ENCODE measurements at regions of chr1 and their contacts with region 1.

Region 1: DNA sequence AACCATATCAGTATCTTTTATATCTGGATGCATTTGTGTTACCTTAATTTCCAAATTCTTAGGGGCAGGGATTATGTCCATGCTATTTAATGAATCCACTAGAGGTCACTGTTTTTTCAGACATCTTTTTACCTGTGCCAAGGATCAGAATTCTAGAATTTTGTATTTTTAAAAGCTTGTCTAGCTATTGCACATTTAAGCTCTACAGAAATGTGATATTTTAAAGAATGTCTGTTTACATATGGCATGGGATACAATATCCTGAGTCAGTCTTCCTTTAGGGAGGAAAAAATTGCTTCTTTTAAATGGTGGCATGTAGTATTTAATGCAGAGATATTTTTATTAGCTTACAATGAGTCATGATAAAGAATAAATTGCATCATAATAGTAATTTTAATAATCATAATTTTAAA is 11.3 kb downstream of the RPAP2 start:
- DNase-seq: no peak
- H3K4me3 ChIP-seq: no peak overlapping the region
- H3K27ac ChIP-seq: no peak overlapping the region
- H3K4me1 ChIP-seq: no peaks in the 10 kb centered on the region
- H3K27me3 ChIP-seq: no peaks in the 10 kb centered on the region
- CTCF ChIP-seq: peak; percentile 29 to 57 (median 51)
- EP300 ChIP-seq: no peak
- POLR2A ChIP-seq: no peak

Region 2: GRCh38 chr1:91836331-91837040 is 473.7 kb before region 1 on chr1:
- in situ Hi-C with region 1: no loop called
- intact Hi-C with region 1: no loop called
- DNase-seq: no peak
- H3K4me3 ChIP-seq: no peak overlapping the region
- H3K27ac ChIP-seq: peak overlapping the region; percentile 3 to 69 (median 36)
- H3K4me1 ChIP-seq: peaks cover 0 to 19% (median 8%) of the 10 kb centered on the region in 4 donors
- H3K27me3 ChIP-seq: no peaks in the 10 kb centered on the region
- CTCF ChIP-seq: peak in 2 of 5 experiments; percentile 14 to 43
- EP300 ChIP-seq: no peak
- POLR2A ChIP-seq: no peak

Region 3: GRCh38 chr1:91981996-91982609 is 328.1 kb before region 1 on chr1:
- in situ Hi-C with region 1: no loop called
- intact Hi-C with region 1: no loop called
- DNase-seq: no peak
- H3K4me3 ChIP-seq: no peak overlapping the region
- H3K27ac ChIP-seq: no peak overlapping the region
- H3K4me1 ChIP-seq: no peaks in the 10 kb centered on the region
- H3K27me3 ChIP-seq: no peaks in the 10 kb centered on the region
- CTCF ChIP-seq: no peak
- EP300 ChIP-seq: no peak
- POLR2A ChIP-seq: no peak

Region 4: DNA sequence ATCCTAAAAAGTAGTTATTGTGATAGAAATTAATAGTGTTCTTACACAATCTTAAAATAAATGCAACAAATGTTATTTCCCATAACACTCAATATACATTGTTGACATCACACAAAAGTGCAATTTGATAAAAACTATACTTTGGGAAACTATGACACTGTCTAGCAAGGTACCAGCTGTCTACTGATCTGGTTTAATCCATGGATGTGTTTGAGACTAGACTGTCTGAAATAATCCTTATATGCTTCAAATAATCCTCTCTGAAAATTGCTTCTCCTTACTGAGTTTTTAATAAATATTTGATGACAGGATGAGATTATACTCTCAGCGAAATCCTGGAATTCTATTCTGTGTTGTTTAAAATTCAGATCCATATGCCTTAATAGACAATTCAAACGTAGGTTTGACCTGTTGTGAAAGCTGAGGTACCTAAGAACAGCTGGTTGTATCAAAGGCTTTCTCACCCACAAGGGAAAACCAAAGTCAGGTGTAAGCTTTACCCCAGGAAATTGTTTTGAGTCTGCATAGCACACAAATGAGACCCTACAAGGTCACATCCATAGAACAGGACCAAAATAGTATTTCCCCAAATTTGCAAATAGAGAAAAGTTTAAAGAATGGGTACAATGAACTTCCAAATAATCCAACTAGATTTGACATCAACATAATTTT is 185.3 kb after region 1 on chr1:
- in situ Hi-C with region 1: loop called in 1 of 4 experiments (anchors 10 kb)
- intact Hi-C with region 1: no loop called
- DNase-seq: no peak
- H3K4me3 ChIP-seq: no peak overlapping the region
- H3K27ac ChIP-seq: no peak overlapping the region
- H3K4me1 ChIP-seq: no peaks in the 10 kb centered on the region
- H3K27me3 ChIP-seq: no peaks in the 10 kb centered on the region
- CTCF ChIP-seq: no peak
- EP300 ChIP-seq: no peak
- POLR2A ChIP-seq: no peak

Region 5: GRCh38 chr1:92623187-92623778 is 313.1 kb after region 1 on chr1:
- in situ Hi-C with region 1: loop called (anchors 10 to 25 kb)
- intact Hi-C with region 1: no loop called
- DNase-seq: no peak
- H3K4me3 ChIP-seq: no peak overlapping the region
- H3K27ac ChIP-seq: no peak overlapping the region
- H3K4me1 ChIP-seq: no peaks in the 10 kb centered on the region
- H3K27me3 ChIP-seq: no peaks in the 10 kb centered on the region
- CTCF ChIP-seq: peak in 4 of 5 experiments; percentile 22 to 27 (median 25)
- EP300 ChIP-seq: no peak
- POLR2A ChIP-seq: no peak

Region 6: DNA sequence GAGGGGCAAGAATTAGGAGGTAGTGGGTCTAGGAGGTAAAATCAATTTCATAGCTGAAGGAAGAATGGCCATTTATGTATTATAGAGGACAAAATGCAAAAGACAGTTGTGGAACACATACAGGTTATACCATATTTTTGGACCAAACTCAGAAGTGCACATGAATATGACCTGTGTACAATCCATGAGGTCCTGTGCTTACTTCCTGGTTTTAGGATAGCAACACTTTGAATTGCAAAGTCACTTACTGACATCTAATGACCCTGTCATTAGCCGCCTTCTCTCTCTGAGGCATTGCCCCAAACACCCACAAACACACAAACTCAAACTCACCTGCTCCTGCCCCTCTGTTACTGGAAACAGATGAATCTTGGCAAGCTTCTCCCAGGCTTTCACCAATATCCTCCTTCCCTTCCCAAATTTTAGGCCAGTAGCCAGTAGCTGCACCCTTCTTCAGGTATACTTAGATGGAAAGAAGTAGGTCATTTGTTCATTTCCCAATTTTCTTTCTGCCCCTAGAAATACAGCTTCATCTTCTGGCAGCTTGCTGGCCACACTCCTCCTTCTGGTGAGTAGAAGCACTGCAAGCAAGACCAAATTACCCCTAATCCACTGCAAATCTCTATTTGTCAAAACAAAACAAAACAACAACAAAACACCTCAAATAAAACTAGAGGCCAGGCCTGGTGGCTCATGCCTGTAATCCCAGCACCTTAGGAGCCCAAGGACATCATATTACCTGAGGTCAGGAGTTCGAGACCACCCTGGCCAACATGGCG is 508.0 kb after region 1 on chr1:
- in situ Hi-C with region 1: loop called in 1 of 4 experiments (anchors 25 kb)
- intact Hi-C with region 1: no loop called
- DNase-seq: no peak
- H3K4me3 ChIP-seq: no peak overlapping the region
- H3K27ac ChIP-seq: peak overlapping the region; percentile 57 to 77 (median 65)
- H3K4me1 ChIP-seq: peaks cover 0 to 20% (median 12%) of the 10 kb centered on the region in 4 donors
- H3K27me3 ChIP-seq: no peaks in the 10 kb centered on the region
- CTCF ChIP-seq: peak; percentile 64 to 87 (median 71)
- EP300 ChIP-seq: no peak
- POLR2A ChIP-seq: no peak